ENCODE measurements at regions of chr16 and their contacts with region 1.

Region 1: GRCh38 chr16:1378804-1379303 is 27.1 kb downstream of the GNPTG start:
- DNase-seq: no peak
- ATAC-seq: peak; percentile 77
- H3K4me3 Mint-ChIP-seq: peak overlapping the region; percentile 80
- H3K27ac Mint-ChIP-seq: peak overlapping the region; percentile 78
- H3K4me1 Mint-ChIP-seq: peaks cover 14% of the 10 kb centered on the region
- H3K27me3 Mint-ChIP-seq: no peaks in the 10 kb centered on the region
- CTCF ChIP-seq: no peak

Region 2: DNA sequence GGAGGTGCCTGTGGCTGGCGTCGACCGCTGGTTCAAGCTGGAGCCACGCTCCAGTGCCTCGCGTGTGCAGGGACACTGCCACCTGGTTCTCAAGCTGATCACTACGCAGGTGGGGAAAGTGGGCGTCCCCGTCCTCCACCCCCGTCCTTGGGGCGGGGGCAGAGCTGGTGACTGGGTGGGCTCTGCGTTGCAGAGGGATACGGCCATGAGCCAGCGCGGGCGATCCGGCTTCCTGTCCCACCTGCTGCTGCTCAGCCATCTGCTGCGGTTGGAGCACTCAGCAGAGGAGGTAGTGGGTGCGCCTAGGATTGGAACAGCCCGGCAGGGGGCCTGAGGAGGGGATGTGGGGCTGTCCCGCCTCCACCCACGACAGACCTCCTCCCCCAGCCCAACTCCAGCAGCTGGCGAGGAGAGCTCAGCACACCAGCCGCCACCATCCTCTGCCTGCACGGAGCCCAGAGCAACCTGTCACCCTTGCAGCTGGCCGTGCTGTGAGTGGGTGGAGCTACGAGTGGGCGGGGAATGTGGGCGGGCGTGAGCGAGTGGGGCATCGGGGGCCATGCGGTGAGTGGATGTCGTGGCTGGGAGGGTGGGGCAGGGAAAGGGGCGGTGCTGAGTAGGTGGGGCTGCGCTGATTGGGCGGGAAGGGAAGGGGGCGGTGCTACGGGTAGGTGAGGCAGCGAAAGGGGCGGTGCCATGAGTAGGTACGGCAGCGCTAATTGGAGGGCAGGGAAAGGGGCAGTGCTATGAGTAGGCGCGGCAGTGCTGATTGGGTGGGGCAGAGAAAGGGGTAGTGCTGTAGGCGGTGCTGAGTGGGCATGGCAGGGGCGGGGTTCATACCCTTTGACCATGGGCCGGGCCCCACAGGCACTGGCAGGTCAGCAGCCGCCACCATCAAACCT is 36.1 kb before region 1 on chr16:
- CTCF ChIA-PET with region 1: no interaction called
- POLR2A ChIA-PET with region 1: interaction called, 4 read pairs
- intact Hi-C with region 1: loop called (anchors 1 kb)
- DNase-seq: peak; percentile 87
- ATAC-seq: peak; percentile 90
- H3K4me3 Mint-ChIP-seq: peak overlapping the region; percentile 75
- H3K27ac Mint-ChIP-seq: peak overlapping the region; percentile 50
- H3K4me1 Mint-ChIP-seq: peaks cover 20% of the 10 kb centered on the region
- H3K27me3 Mint-ChIP-seq: no peaks in the 10 kb centered on the region
- CTCF ChIP-seq: no peak

Region 3: GRCh38 chr16:1408171-1408837 is 29.4 kb after region 1 on chr16:
- CTCF ChIA-PET with region 1: no interaction called
- POLR2A ChIA-PET with region 1: interaction called, 8 read pairs
- intact Hi-C with region 1: loop called (anchors 1 kb)
- DNase-seq: peak; percentile 98
- ATAC-seq: peak; percentile 94
- H3K4me3 Mint-ChIP-seq: peak overlapping the region; percentile 80
- H3K27ac Mint-ChIP-seq: peak overlapping the region; percentile 56
- H3K4me1 Mint-ChIP-seq: peaks cover 30% of the 10 kb centered on the region
- H3K27me3 Mint-ChIP-seq: no peaks in the 10 kb centered on the region
- CTCF ChIP-seq: no peak

Region 4: GRCh38 chr16:1413684-1414531 is 35.1 kb after region 1 on chr16:
- CTCF ChIA-PET with region 1: no interaction called
- POLR2A ChIA-PET with region 1: no interaction called
- intact Hi-C with region 1: loop called (anchors 1 kb)
- DNase-seq: peak; percentile 61
- ATAC-seq: peak; percentile 64
- H3K4me3 Mint-ChIP-seq: peak overlapping the region; percentile 88
- H3K27ac Mint-ChIP-seq: peak overlapping the region; percentile 85
- H3K4me1 Mint-ChIP-seq: peaks cover 22% of the 10 kb centered on the region
- H3K27me3 Mint-ChIP-seq: no peaks in the 10 kb centered on the region
- CTCF ChIP-seq: no peak

Region 5: DNA sequence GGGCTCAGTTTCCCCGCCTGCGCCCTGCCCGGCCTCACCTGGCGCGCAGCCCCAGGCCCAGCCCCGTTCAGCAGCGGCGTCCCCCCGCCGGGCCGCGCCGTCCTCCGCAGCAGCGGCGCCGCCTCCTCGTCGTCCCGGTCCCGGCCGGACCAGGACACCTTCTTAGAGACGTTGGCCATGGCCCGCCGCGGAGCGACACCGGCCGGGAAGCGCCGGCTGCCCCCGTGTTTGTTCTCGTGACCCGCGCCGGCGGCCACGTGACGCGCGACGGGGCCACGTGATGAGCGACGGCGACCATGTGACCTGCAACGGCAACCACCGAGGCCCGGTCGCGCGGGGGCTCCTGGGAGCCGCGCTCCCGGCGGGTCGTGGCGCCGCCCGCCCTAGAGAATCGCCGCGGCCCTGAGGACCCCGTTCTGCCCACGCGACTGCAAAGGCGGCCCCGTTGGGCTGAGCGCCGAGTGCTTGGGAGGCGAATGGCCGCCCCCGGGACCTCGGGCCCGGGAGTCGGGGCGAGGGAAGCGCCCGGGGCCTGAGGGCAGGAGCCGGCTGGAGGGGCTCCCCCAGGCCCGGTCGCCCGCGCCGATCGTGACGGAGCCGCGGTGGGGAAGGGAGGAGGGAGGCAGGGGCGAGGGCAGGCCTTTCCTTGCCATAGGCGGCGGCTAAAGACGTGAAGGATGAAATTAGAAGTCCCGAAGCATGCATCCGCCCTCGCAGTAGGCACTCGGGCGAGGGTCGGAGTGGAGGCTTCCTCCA is 96.1 kb after region 1 on chr16 and contains the start of gene CLCN7:
- CTCF ChIA-PET with region 1: no interaction called
- POLR2A ChIA-PET with region 1: no interaction called
- intact Hi-C with region 1: loop called (anchors 1 kb)
- DNase-seq: peak; percentile 91
- ATAC-seq: peak; percentile 84
- H3K4me3 Mint-ChIP-seq: peak within 1 kb of the TSS; percentile 89
- H3K27ac Mint-ChIP-seq: peak within 1 kb of the TSS; percentile 92
- H3K4me1 Mint-ChIP-seq: peaks cover 63% of the 10 kb centered on the region
- H3K27me3 Mint-ChIP-seq: no peaks in the 10 kb centered on the region
- CTCF ChIP-seq: no peak
- total RNA-seq, gene CLCN7: 127 and 144 TPM in 2 replicates